ENCODE measurements at regions of chr16 and their contacts with region 1.

Region 1: GRCh38 chr16:50806099-50807062 is 64.5 kb downstream of the CYLD start:
- DNase-seq: peak; percentile 89 to 91 (median 90)
- H3K4me3 ChIP-seq: peak overlapping the region; percentile 23 to 39
- H3K4me3 Mint-ChIP-seq: peak overlapping the region; percentile 72 to 89 (median 82)
- H3K27ac ChIP-seq: no peak overlapping the region
- H3K27ac Mint-ChIP-seq: peak overlapping the region; percentile 81 to 95 (median 90)
- H3K4me1 ChIP-seq: peaks cover 8% of the 10 kb centered on the region
- H3K4me1 Mint-ChIP-seq: peaks cover 10 to 22% (median 16%) of the 10 kb centered on the region in 4 donors
- H3K27me3 ChIP-seq: no peaks in the 10 kb centered on the region
- H3K27me3 Mint-ChIP-seq: peaks cover 0 to 2% of the 10 kb centered on the region in 2 donors

Region 2: DNA sequence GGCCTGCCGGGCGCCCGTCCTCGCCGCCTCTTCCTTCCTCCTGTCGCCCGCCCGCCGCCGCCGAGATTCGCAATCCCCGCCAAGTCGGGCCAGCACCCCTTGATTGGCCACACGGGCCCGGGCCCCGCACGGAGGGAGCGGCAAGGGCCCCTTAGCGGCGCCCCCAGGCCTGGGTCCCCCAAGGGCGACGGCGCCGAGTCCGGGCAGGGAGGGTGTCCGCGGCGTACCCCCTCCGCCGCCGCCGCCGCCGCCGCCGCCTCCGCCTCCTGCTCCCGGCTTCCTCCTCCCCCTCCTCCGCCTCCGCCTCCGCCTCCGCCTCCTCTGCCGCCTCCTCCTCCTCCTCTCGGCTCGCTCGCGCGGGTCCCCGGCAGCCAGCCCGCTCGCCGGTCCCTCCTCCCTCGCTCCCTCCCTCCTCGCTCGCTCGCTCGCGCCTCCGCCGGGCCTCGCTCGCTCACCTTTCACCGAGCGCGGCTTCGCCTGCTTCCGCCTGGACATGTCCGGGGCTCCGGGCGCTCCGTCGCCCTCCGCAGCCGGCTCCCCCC is 951.0 kb before region 1 on chr16:
- CTCF ChIA-PET with region 1: no interaction called
- POLR2A ChIA-PET with region 1: no interaction called
- intact Hi-C with region 1: loop called (anchors 10 kb)
- DNase-seq: peak; percentile 45 to 55 (median 47)
- H3K4me3 ChIP-seq: no peak overlapping the region
- H3K4me3 Mint-ChIP-seq: peak overlapping the region in 6 of 8 donors; percentile 20 to 76 (median 38)
- H3K27ac ChIP-seq: no peak overlapping the region
- H3K27ac Mint-ChIP-seq: no peak overlapping the region
- H3K4me1 ChIP-seq: peaks cover 10% of the 10 kb centered on the region
- H3K4me1 Mint-ChIP-seq: peaks cover 3 to 32% (median 9%) of the 10 kb centered on the region in 4 donors
- H3K27me3 ChIP-seq: peaks cover 26% of the 10 kb centered on the region
- H3K27me3 Mint-ChIP-seq: peaks cover 28 to 35% of the 10 kb centered on the region in 2 donors

Region 3: GRCh38 chr16:50266337-50267091 is 539.9 kb before region 1 on chr16 and contains the start of gene ADCY7:
- CTCF ChIA-PET with region 1: interaction called, 6 read pairs
- POLR2A ChIA-PET with region 1: interaction called, 3 read pairs
- intact Hi-C with region 1: loop called (anchors 1 kb)
- DNase-seq: peak; percentile 77 to 92 (median 80)
- H3K4me3 ChIP-seq: peak within 1 kb of the TSS; percentile 75 to 76
- H3K4me3 Mint-ChIP-seq: peak within 1 kb of the TSS; percentile 93 to 99 (median 98)
- H3K27ac ChIP-seq: peak within 1 kb of the TSS; percentile 81
- H3K27ac Mint-ChIP-seq: peak within 1 kb of the TSS; percentile 95 to 99 (median 98)
- H3K4me1 ChIP-seq: peaks cover 60% of the 10 kb centered on the region
- H3K4me1 Mint-ChIP-seq: peaks cover 40 to 84% (median 56%) of the 10 kb centered on the region in 4 donors
- H3K27me3 ChIP-seq: no peaks in the 10 kb centered on the region
- H3K27me3 Mint-ChIP-seq: no peaks in the 10 kb centered on the region
- total RNA-seq, gene ADCY7: 230 to 235 TPM

Region 4: GRCh38 chr16:50360033-50360778 is 446.2 kb before region 1 on chr16:
- CTCF ChIA-PET with region 1: interaction called, 26 read pairs
- POLR2A ChIA-PET with region 1: interaction called, 3 read pairs
- intact Hi-C with region 1: no loop called
- DNase-seq: no peak
- H3K4me3 ChIP-seq: no peak overlapping the region
- H3K4me3 Mint-ChIP-seq: peak overlapping the region in 2 of 8 donors; percentile 7 to 13
- H3K27ac ChIP-seq: no peak overlapping the region
- H3K27ac Mint-ChIP-seq: peak overlapping the region; percentile 17 to 88 (median 83)
- H3K4me1 ChIP-seq: peaks cover 47% of the 10 kb centered on the region
- H3K4me1 Mint-ChIP-seq: peaks cover 34 to 73% (median 53%) of the 10 kb centered on the region in 4 donors
- H3K27me3 ChIP-seq: no peaks in the 10 kb centered on the region
- H3K27me3 Mint-ChIP-seq: no peaks in the 10 kb centered on the region

Region 5: GRCh38 chr16:50665128-50665878 is 141.1 kb before region 1 on chr16:
- CTCF ChIA-PET with region 1: interaction called, 458 read pairs
- POLR2A ChIA-PET with region 1: interaction called, 40 read pairs
- intact Hi-C with region 1: loop called (anchors 1 kb)
- DNase-seq: peak; percentile 76 to 84 (median 79)
- H3K4me3 ChIP-seq: peak overlapping the region; percentile 37 to 61
- H3K4me3 Mint-ChIP-seq: peak overlapping the region; percentile 75 to 86 (median 82)
- H3K27ac ChIP-seq: peak overlapping the region; percentile 41
- H3K27ac Mint-ChIP-seq: peak overlapping the region; percentile 73 to 95 (median 90)
- H3K4me1 ChIP-seq: peaks cover 40% of the 10 kb centered on the region
- H3K4me1 Mint-ChIP-seq: peaks cover 21 to 43% (median 32%) of the 10 kb centered on the region in 4 donors
- H3K27me3 ChIP-seq: no peaks in the 10 kb centered on the region
- H3K27me3 Mint-ChIP-seq: no peaks in the 10 kb centered on the region

Region 6: DNA sequence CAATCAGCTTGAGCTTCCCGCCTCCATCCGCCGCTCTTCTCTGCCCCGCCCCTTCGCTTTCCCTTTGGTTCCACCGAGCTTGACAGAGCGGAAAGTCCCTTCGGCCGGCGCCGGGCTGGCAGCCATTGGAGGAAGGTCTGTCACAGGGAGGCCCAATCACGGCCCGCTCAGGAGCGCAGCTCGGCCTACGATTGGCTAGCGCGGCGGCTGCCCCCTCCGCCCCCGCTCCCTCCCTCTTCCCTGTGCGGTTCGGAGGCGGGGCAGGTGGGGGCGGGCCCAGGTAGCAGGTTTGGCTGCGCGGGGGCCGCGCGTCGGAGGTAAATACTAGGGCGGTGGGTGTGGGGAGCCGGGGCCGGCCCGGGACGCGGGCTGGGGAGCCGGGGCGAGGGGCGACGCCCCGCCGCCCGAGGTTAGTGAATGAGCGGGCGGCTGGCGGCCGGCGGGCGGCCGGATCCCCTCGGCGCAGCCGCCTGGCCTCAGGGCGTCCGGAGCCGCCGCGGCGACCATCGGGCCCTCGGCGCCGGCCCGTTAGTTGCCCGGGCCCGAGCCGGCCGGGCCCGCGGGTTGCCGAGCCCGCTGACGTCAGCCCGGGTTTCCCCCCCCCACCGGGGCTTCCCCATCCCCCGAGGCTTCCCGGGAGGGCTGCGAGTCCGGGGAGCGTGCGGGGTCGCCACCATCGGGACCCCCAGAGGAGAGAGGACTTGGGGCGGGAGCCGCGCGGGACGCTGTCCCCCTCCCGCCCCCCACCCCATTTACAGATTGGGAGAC is 64.4 kb before region 1 on chr16 and contains the start of gene CYLD:
- CTCF ChIA-PET with region 1: interaction called, 82 read pairs
- POLR2A ChIA-PET with region 1: interaction called, 28 read pairs
- intact Hi-C with region 1: loop called (anchors 1 kb)
- DNase-seq: peak; percentile 99 to 100 (median 100)
- H3K4me3 ChIP-seq: peak within 1 kb of the TSS; percentile 72 to 80
- H3K4me3 Mint-ChIP-seq: peak within 1 kb of the TSS; percentile 95 to 99 (median 98)
- H3K27ac ChIP-seq: peak within 1 kb of the TSS; percentile 100
- H3K27ac Mint-ChIP-seq: peak within 1 kb of the TSS; percentile 95 to 99 (median 99)
- H3K4me1 ChIP-seq: peaks cover 38% of the 10 kb centered on the region
- H3K4me1 Mint-ChIP-seq: peaks cover 22 to 62% (median 35%) of the 10 kb centered on the region in 4 donors
- H3K27me3 ChIP-seq: no peaks in the 10 kb centered on the region
- H3K27me3 Mint-ChIP-seq: no peaks in the 10 kb centered on the region
- total RNA-seq, gene CYLD: 294 to 299 TPM

Region 7: DNA sequence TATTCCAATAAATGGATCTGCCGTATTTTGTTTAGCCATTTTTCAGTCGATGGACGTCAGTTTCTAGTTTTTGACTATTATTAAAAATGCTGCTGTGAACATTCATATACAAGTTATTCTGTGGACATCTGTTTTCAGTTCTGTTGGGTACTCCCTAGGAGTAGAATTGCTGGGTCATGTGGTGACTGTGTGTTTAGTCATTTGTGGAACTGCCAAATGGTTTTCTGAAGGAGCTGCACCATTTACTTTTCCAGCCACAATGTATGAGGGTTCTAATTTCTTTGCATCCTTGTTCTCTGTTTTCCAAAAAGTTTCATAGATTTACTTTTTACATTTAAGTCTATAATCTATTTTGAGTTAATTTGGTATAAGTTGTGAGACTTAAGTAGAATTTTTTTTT is 35.0 kb before region 1 on chr16:
- CTCF ChIA-PET with region 1: interaction called, 20 read pairs
- POLR2A ChIA-PET with region 1: interaction called, 3 read pairs
- intact Hi-C with region 1: no loop called
- DNase-seq: no peak
- H3K4me3 ChIP-seq: no peak overlapping the region
- H3K4me3 Mint-ChIP-seq: peak overlapping the region in 4 of 8 donors; percentile 15 to 76 (median 34)
- H3K27ac ChIP-seq: no peak overlapping the region
- H3K27ac Mint-ChIP-seq: peak overlapping the region in 2 of 7 donors; percentile 31 to 64
- H3K4me1 ChIP-seq: peaks cover 96% of the 10 kb centered on the region
- H3K4me1 Mint-ChIP-seq: peaks cover 59 to 99% (median 76%) of the 10 kb centered on the region in 4 donors
- H3K27me3 ChIP-seq: no peaks in the 10 kb centered on the region
- H3K27me3 Mint-ChIP-seq: no peaks in the 10 kb centered on the region

Measured in CD4-positive, alpha-beta memory T cell (primary cell).